ENCODE measurements at regions of chr6 and their contacts with region 1.

Region 1: DNA sequence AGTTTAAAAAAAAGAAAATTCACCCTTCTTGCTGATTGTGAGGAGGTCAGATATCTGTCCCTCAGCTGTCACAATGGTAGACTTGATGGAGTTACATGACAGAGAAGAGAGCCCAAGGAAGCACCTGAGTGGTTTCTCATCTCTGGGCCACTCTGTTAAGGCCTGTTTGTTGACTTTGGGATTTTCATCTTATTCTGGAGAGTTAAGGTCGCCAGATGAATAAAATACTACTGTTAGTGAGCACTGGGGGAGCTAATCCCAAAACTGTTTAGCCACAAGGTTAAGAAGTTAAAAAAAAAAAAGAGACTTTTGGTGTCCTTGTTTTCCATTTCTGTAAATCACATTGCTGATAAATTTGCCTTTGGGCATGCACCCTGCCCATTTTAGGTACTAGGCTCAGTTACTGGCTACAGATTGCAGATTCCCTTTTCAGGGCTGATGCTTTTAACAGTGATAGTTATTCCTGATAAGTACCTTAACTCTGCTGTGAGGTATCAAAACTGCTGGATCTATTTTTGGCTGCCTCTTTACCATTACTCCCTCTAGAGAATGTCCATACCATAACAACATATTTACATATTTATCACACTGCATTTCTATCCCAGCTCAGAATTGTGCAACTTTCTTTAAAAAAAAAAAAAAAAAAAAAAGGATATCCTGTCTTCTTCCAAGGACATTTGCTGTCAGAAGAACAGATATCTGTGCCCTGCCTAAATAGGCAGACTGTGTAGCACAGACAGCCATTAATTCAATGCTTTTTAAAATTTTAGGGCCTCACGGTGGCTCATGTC is 94.6 kb downstream of the SSR1 start:
- DNase-seq: no peak
- ATAC-seq: no peak
- H3K4me3 ChIP-seq: no peak overlapping the region
- H3K4me3 Mint-ChIP-seq: no peak overlapping the region
- H3K27ac ChIP-seq: no peak overlapping the region
- H3K27ac Mint-ChIP-seq: peak overlapping the region in 1 of 2 donors; percentile 34
- H3K4me1 ChIP-seq: no peaks in the 10 kb centered on the region
- H3K4me1 Mint-ChIP-seq: no peaks in the 10 kb centered on the region
- H3K27me3 ChIP-seq: no peaks in the 10 kb centered on the region
- H3K27me3 Mint-ChIP-seq: no peaks in the 10 kb centered on the region

Region 2: DNA sequence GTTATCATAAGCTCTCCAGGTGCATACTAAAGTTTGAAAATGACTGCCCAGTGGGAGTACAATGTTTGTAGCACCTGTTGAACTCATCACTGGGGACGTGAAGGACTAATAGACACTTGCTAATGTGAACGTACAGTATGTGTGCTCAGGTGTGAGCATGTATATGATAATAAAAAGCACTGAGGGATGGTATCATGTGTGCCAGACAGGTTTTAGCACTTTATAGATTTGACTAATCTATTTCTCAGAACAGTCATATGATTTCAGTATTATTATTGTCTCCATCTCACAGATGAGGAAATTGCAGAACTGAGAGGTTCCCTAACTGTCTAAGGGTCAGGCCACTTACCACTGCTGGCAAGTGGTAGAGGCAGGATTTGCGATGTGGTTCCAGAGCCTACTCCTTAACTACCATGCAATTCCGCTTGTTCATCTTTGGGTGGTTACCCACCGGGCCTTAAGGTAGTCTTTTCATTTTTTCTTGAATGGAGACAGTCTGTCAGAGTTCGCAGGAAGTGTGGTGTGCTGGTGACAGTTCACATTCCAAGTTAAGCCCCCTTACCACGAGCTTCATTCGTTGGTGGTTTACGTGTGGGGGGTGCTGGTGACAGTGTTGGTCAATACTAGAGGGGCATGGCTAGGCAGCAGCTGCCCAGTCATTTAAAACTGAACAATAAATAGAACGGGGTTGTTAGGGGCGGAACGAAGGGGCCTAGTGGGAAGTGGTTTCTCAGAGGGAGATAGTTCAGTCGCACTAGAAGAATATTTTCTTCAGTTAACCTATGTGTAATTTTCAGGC is 63.9 kb before region 1 on chr6:
- CTCF ChIA-PET with region 1: no interaction called
- POLR2A ChIA-PET with region 1: interaction called in 1 of 2 experiments, 12 read pairs
- DNase-seq: peak in 6 of 35 experiments; percentile 6 to 42 (median 20)
- ATAC-seq: peak; percentile 27 to 83 (median 52)
- H3K4me3 ChIP-seq: no peak overlapping the region
- H3K4me3 Mint-ChIP-seq: peak overlapping the region; percentile 26 to 65 (median 42)
- H3K27ac ChIP-seq: peak overlapping the region; percentile 26
- H3K27ac Mint-ChIP-seq: peak overlapping the region; percentile 48 to 88
- H3K4me1 ChIP-seq: peaks cover 32 to 37% of the 10 kb centered on the region in 2 experiments
- H3K4me1 Mint-ChIP-seq: peaks cover 84 to 92% (median 90%) of the 10 kb centered on the region in 3 donors
- H3K27me3 ChIP-seq: no peaks in the 10 kb centered on the region
- H3K27me3 Mint-ChIP-seq: no peaks in the 10 kb centered on the region